Heart left ventricle (tissue), 16 donors: ENCODE measurements at regions of chr17 and their contacts with region 1.

Region 1: DNA sequence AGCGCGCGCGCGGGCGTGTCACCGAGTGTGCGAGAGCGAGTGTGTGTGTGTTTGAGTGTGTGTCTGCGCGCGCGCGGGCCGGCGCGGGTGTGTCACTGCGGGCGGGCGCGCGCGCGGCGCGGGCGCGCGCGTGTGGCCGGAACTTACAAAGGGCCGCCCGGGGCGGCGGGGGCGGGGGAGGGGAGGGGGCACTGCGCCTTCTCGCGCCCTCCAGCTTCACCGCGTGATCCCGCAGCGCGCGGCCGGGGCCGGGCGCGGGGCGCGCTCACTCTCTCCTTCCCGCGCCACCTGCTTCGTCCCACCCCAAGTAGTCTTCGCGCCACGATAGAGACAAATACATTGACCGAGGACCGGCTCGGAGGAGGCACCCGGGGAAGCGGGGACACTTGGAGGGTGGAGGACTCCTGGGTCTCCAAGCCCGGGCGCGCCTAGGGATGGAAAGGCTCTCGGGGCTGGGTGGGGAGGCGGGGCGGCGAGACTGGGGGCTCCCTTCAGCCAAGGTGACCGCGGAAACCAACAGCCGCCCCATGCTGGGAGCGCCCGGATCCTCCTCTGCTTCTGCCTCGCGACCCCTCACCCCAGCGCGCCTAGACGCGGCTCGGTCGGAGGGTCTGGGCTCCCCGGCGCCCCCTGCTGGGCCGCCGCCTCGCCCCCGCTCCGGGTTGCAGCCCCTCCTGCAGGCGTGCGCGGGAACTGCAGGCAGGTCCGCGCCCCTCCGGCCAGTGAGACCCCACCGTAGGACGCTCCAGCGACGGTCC is at the start of gene SRCIN1:
- DNase-seq: peak; percentile 40 to 74 (median 58)
- ATAC-seq: peak in 3 of 4 donors; percentile 3 to 32 (median 27)
- H3K4me3 ChIP-seq: peak within 1 kb of the TSS; percentile 30 to 67 (median 55)
- H3K27ac ChIP-seq: peak within 1 kb of the TSS in 6 of 12 donors; percentile 11 to 58 (median 24)
- H3K4me1 ChIP-seq: peaks cover 0 to 41% (median 12%) of the 10 kb centered on the region in 12 donors
- H3K27me3 ChIP-seq: peaks cover 13 to 91% (median 56%) of the 10 kb centered on the region in 9 donors
- CTCF ChIP-seq: peak; percentile 53 to 79 (median 73)
- POLR2A ChIP-seq: no peak
- total RNA-seq, gene SRCIN1: 0.46 to 1.7 (median 1.1) TPM

Region 2: GRCh38 chr17:38557836-38558727 is 48.0 kb before region 1 on chr17:
- intact Hi-C with region 1: loop called in 1 of 10 experiments (anchors 5 kb)
- DNase-seq: peak; percentile 88 to 95 (median 92)
- ATAC-seq: peak; percentile 77 to 95 (median 92)
- H3K4me3 ChIP-seq: peak overlapping the region; percentile 8 to 57 (median 44)
- H3K27ac ChIP-seq: peak overlapping the region in 4 of 12 donors; percentile 3 to 32 (median 16)
- H3K4me1 ChIP-seq: peaks cover 0 to 38% (median 25%) of the 10 kb centered on the region in 12 donors
- H3K27me3 ChIP-seq: peaks cover 29 to 52% (median 43%) of the 10 kb centered on the region in 9 donors
- CTCF ChIP-seq: peak; percentile 85 to 97 (median 93)
- POLR2A ChIP-seq: peak in 1 of 2 donors; percentile 43

Region 3: DNA sequence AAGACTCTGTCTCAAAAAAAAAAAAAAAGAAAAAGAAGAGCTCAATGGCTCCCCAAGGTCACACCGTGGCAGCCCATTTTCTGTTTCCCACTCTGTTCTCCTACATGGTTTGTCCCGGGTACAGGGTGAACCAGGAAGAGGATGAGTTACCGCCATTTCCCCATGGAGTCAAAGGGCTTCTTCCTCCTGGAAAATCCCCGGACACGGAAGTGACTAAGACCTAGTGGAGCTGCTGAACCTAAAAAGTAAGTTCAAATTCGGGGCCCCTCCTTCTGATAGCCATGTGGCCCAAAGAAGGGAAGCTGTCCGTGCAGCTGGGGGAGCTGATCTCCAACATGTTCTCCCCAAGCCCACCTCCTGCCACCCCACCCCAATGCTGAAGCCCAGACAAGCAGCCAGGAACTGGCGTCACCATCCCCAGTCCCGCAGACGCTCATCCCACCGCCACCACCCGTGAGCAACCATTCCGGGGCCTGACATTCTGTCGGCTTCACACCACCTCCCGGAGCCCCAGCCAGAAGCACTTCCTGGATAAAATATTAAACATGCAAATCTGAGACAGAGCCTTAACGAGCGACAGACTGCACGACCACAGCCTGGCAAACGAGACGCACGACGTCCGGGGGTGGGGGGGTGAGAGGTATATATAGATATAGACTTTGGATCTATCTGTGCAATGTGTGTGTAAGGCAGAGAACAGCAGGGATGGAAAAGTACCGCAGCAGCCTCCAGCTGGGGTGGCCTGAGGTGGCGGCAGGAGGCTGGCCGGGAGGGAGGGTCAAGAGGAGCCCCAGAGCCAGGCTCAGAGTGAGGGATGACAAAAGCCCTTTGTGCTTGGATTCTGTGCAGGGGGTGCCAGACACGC is 51.1 kb after region 1 on chr17:
- intact Hi-C with region 1: loop called in 2 of 10 experiments (anchors 5 kb)
- DNase-seq: no peak
- ATAC-seq: no peak
- H3K4me3 ChIP-seq: peak overlapping the region in 3 of 12 donors; percentile 1 to 10 (median 4)
- H3K27ac ChIP-seq: no peak overlapping the region
- H3K4me1 ChIP-seq: peaks cover 0 to 8% (median 5%) of the 10 kb centered on the region in 12 donors
- H3K27me3 ChIP-seq: peaks cover 0 to 36% (median 18%) of the 10 kb centered on the region in 9 donors
- CTCF ChIP-seq: no peak
- POLR2A ChIP-seq: no peak